HepG2 (cell line): ENCODE measurements at regions of chr11 and their contacts with region 1.

Region 1: DNA sequence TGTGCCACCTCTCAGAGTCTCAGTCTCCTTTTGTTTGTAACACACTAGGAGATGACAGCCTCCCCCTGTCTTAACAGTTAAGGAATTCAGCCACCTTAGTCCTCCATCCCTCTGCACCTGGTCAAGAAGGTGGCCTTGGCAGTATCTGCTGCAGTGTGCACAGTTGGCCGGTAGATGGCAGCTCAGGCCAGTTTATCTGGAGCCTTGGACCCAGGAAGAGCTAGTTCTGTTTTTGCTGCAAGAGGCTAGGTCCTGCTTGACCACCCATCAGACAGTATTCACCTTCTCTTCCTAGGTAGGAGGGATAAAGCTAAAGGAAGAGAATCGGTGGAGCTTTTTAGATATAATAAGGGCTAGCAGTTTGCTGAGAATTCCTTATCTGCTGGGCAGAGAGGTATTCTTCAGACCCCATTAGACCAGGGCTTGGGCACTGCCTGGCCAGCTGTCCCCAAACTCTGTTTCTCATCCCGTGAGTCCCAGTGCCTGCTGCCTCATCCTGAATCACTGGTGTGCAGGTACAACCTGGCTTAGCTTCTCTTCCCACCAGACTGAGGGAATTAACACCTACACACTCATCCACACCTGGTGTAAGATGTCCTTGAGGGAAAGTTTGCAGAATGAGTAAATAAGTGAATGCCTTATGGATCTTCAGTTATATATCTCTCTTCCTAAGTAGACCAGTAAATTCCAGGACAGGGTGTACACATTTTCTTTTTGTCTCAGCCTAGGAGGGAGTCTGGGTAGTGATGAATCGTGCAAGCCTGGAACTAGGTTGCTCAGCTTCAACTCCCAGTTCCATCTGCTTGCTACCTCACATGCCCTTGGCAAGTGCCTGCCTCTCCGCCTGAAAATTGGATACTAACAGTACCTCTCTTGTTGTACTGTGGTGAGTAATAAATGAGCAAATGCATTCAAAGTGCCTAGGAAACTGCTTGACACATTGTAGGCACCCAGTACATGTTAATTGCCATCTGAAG is 70.8 kb upstream of the NARS2 start:
- DNase-seq: peak; percentile 63
- ATAC-seq: peak; percentile 92
- H3K4me3 ChIP-seq: peak overlapping the region in 1 of 3 experiments; percentile 19; a peak in 1 of 6 replicates
- H3K27ac ChIP-seq: no peak overlapping the region
- H3K4me1 ChIP-seq: peaks cover 6% of the 10 kb centered on the region; the same call in 1 of the 2 replicates
- H3K27me3 ChIP-seq: no peaks in the 10 kb centered on the region; a peak in 1 of 5 replicates
- CTCF ChIP-seq: peak; percentile 98
- EP300 ChIP-seq: no peak
- POLR2A ChIP-seq: no peak
- RAD21 ChIP-seq: peak; percentile 78

Region 2: GRCh38 chr11:78080818-78081495 is 564.6 kb before region 1 on chr11:
- CTCF ChIA-PET with region 1: no interaction called
- POLR2A ChIA-PET with region 1: no interaction called
- in situ Hi-C with region 1: no loop called
- intact Hi-C with region 1: no loop called
- DNase-seq: peak; percentile 64
- ATAC-seq: no peak
- H3K4me3 ChIP-seq: no peak overlapping the region
- H3K27ac ChIP-seq: no peak overlapping the region
- H3K4me1 ChIP-seq: peaks cover 55% of the 10 kb centered on the region
- H3K27me3 ChIP-seq: no peaks in the 10 kb centered on the region; a peak in 1 of 5 replicates
- CTCF ChIP-seq: no peak
- EP300 ChIP-seq: no peak
- POLR2A ChIP-seq: peak in 1 of 2 experiments; percentile 17; a peak in 1 of 4 replicates
- RAD21 ChIP-seq: no peak

Region 3: DNA sequence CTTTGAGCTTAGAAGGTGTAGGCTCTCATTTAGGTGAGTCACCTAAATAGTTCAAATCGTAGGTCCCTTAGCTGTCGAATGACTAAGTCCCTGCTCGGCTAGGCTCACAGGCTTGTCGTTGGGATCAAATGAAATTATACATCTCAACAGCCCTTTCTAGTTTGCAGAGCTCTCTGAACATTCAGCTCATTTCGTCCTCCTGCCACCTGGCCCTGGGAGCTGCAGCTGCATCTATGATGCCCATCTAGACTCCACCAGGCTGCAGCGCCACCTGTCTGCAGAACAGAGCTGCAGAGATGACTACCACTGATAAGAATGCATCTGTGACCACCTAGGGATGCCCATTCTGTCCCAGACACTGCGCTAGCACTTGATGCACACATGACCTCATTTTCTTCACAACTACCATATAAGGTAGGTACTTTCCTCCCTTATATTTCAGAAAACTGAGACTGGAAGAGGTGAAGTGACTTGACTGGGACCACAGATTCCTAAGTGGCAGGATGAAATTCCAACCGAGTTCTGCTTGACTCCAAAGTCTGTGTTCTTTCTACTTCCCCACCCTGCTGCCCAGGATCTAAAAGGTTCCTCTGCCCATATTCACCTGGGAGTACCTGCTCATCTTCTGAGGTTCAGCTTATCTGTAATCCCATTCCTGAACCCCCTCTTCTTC is 70.3 kb after region 1 on chr11:
- CTCF ChIA-PET with region 1: interaction called, 36 read pairs
- POLR2A ChIA-PET with region 1: no interaction called
- in situ Hi-C with region 1: loop called (anchors 5 kb)
- intact Hi-C with region 1: loop called (anchors 1 kb)
- DNase-seq: peak; percentile 57
- ATAC-seq: peak; percentile 97
- H3K4me3 ChIP-seq: no peak overlapping the region
- H3K27ac ChIP-seq: no peak overlapping the region
- H3K4me1 ChIP-seq: no peaks in the 10 kb centered on the region
- H3K27me3 ChIP-seq: no peaks in the 10 kb centered on the region; a peak in 1 of 5 replicates
- CTCF ChIP-seq: peak; percentile 82
- EP300 ChIP-seq: no peak
- POLR2A ChIP-seq: no peak
- RAD21 ChIP-seq: peak; percentile 36; the same call in 1 of the 2 replicates

Region 4: GRCh38 chr11:79076526-79077115 is 431.1 kb after region 1 on chr11:
- CTCF ChIA-PET with region 1: interaction called, 30 read pairs
- POLR2A ChIA-PET with region 1: no interaction called
- in situ Hi-C with region 1: loop called (anchors 10 kb)
- intact Hi-C with region 1: no loop called
- DNase-seq: peak; percentile 30
- ATAC-seq: peak; percentile 85
- H3K4me3 ChIP-seq: no peak overlapping the region
- H3K27ac ChIP-seq: no peak overlapping the region
- H3K4me1 ChIP-seq: no peaks in the 10 kb centered on the region
- H3K27me3 ChIP-seq: peaks cover 0 to 4% of the 10 kb centered on the region in 2 experiments; a peak in 2 of 5 replicates
- CTCF ChIP-seq: peak; percentile 71
- EP300 ChIP-seq: no peak
- POLR2A ChIP-seq: no peak
- RAD21 ChIP-seq: 0 out of 2 replicates have a peak, but pooled peaks have one; percentile 19

Region 5: GRCh38 chr11:79100093-79100910 is 454.8 kb after region 1 on chr11:
- CTCF ChIA-PET with region 1: interaction called, 4 read pairs
- POLR2A ChIA-PET with region 1: no interaction called
- in situ Hi-C with region 1: no loop called
- intact Hi-C with region 1: loop called (anchors 1 kb)
- DNase-seq: peak; percentile 45
- ATAC-seq: peak; percentile 96
- H3K4me3 ChIP-seq: no peak overlapping the region
- H3K27ac ChIP-seq: no peak overlapping the region
- H3K4me1 ChIP-seq: no peaks in the 10 kb centered on the region
- H3K27me3 ChIP-seq: peaks cover 0 to 3% of the 10 kb centered on the region in 2 experiments; a peak in 2 of 5 replicates
- CTCF ChIP-seq: peak; percentile 83
- EP300 ChIP-seq: no peak
- POLR2A ChIP-seq: no peak
- RAD21 ChIP-seq: peak; percentile 50; the same call in 1 of the 2 replicates

Region 6: DNA sequence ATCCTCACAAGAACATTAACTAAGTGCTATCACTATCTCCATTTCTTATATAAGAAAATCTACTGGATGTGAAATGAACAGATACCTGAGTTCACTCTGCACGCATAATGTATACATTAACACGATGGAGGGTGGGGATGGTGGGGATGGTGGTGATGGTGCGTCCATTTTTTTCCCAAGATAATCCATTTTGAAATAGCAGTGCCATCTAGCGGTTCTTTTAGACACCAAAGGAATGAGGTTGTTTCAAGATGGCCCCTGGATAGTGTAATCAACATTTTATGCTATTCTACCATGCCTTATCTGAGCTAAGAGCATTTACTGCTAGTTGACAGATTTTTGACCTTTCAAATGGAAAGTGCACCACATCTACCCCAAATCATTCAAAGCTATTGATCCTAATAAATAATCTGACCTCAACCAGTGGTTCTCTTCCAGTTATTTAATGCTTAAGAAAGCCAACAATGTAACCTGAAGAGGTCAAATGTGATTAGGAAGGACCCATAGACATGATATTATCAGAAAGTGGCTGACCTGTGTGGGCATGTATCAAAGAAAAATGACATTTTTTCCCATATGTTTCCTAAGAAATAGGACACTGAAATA is 1510.0 kb after region 1 on chr11:
- CTCF ChIA-PET with region 1: no interaction called
- POLR2A ChIA-PET with region 1: no interaction called
- in situ Hi-C with region 1: no loop called
- intact Hi-C with region 1: loop called (anchors 10 kb)
- DNase-seq: peak; percentile 21
- ATAC-seq: peak; percentile 69
- H3K4me3 ChIP-seq: no peak overlapping the region
- H3K27ac ChIP-seq: no peak overlapping the region
- H3K4me1 ChIP-seq: no peaks in the 10 kb centered on the region
- H3K27me3 ChIP-seq: no peaks in the 10 kb centered on the region
- CTCF ChIP-seq: peak; percentile 42
- EP300 ChIP-seq: no peak
- POLR2A ChIP-seq: no peak
- RAD21 ChIP-seq: no peak